A673 (cell line): ENCODE measurements at regions of chr22 and their contacts with region 1.

Region 1: DNA sequence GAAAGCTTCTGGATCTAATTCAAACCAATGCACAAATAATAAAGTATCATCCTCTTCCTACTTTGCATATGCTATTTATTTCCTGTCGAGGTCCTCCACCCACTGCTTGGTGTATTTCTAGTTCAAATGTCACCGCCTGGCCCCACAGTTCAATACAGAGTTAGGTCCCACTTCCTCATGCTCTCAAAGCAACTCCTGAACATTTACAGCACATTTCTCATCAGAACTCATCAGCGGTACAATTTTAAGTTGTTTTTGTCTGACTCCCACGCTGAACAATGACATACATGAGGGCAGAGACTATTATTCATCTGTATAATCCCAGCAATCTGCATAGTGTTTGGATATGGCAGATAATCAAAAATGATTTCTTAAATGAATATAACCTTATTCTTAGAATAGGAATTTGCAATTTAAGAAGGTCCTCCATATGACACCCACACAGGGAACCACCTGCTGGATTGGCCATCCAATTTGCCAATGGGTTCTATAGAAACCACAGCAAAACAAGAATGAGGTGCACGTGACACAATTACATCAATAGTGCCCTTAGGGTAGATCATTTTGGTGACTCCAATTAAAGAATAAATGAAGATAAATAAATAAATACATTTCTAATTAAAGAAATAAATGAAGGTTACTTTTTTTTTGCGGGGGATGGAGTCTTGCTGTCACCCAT is 54.2 kb downstream of the SLC25A17 start:
- DNase-seq: no peak
- H3K4me3 ChIP-seq: no peak overlapping the region
- H3K27ac ChIP-seq: no peak overlapping the region
- H3K4me1 ChIP-seq: no peaks in the 10 kb centered on the region
- H3K27me3 ChIP-seq: no peaks in the 10 kb centered on the region
- CTCF ChIP-seq: no peak

Region 2: DNA sequence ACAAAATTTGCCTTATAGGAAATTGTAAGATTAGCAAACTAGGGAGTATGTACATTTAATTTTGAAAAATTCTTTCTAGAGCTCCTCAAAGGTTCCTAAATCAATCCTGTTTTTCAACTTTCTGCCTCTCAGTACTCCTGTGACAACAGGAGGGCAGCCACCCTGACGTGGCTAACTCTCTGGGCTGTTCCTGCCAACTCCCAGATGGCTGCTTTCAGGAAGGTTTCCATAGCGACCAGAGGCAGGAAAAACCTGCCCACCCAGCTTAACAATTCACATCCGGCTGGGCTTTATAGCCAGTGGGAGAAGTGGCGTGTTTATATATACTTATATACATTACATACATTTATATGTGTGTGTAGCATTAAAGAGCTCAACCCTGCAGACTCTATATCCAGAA is 368.0 kb before region 1 on chr22:
- CTCF ChIA-PET with region 1: no interaction called
- POLR2A ChIA-PET with region 1: interaction called, 13 read pairs
- intact Hi-C with region 1: no loop called
- DNase-seq: peak; percentile 96
- H3K4me3 ChIP-seq: peak overlapping the region; percentile 14
- H3K27ac ChIP-seq: peak overlapping the region; percentile 83
- H3K4me1 ChIP-seq: peaks cover 57% of the 10 kb centered on the region
- H3K27me3 ChIP-seq: no peaks in the 10 kb centered on the region
- CTCF ChIP-seq: no peak

Region 3: GRCh38 chr22:40732999-40733292 is 32.0 kb before region 1 on chr22:
- CTCF ChIA-PET with region 1: interaction called, 12 read pairs
- POLR2A ChIA-PET with region 1: no interaction called
- intact Hi-C with region 1: no loop called
- DNase-seq: no peak
- H3K4me3 ChIP-seq: no peak overlapping the region
- H3K27ac ChIP-seq: no peak overlapping the region
- H3K4me1 ChIP-seq: peaks cover 20% of the 10 kb centered on the region
- H3K27me3 ChIP-seq: no peaks in the 10 kb centered on the region
- CTCF ChIP-seq: no peak